ENCODE measurements at regions of chr14 and their contacts with region 1.

Region 1: GRCh38 chr14:66507722-66508546 is at the start of gene GPHN:
- DNase-seq: peak; percentile 98
- ATAC-seq: peak; percentile 95
- H3K4me3 ChIP-seq: peak within 1 kb of the TSS; percentile 95
- H3K27ac ChIP-seq: peak within 1 kb of the TSS; percentile 78
- H3K4me1 ChIP-seq: peaks cover 22% of the 10 kb centered on the region
- H3K27me3 ChIP-seq: no peaks in the 10 kb centered on the region
- CTCF ChIP-seq: no peak; the same call in 1 of the 2 replicates
- total RNA-seq, gene GPHN: 23.4 and 39.5 TPM in 2 replicates

Region 2: DNA sequence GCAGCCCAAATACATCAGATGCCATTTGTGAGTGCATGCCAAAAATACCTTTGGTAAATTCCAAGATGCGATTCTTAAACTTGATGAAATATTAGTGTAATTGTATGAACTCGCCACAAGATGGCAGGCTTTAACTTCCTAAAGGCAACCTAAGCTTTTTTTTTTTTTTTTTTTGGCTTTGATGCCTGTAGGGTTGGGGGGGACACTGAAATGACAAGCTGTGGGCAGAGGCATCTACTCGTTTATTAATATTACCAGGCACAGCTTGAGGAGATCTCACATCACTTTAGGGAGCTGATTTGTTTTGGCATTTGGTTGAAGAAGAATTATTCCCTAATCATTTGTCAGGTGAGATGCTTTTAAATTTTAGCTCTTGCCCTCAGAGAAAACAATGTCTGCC is 148.4 kb before region 1 on chr14:
- CTCF ChIA-PET with region 1: interaction called, 15 read pairs
- POLR2A ChIA-PET with region 1: no interaction called
- intact Hi-C with region 1: no loop called
- DNase-seq: peak; percentile 70
- ATAC-seq: peak; percentile 34
- H3K4me3 ChIP-seq: no peak overlapping the region
- H3K27ac ChIP-seq: no peak overlapping the region
- H3K4me1 ChIP-seq: no peaks in the 10 kb centered on the region
- H3K27me3 ChIP-seq: peaks cover 40% of the 10 kb centered on the region
- CTCF ChIP-seq: peak; percentile 84

Region 3: GRCh38 chr14:66444271-66444927 is 63.5 kb before region 1 on chr14:
- CTCF ChIA-PET with region 1: no interaction called
- POLR2A ChIA-PET with region 1: no interaction called
- intact Hi-C with region 1: no loop called
- DNase-seq: no peak
- ATAC-seq: no peak
- H3K4me3 ChIP-seq: no peak overlapping the region
- H3K27ac ChIP-seq: no peak overlapping the region
- H3K4me1 ChIP-seq: 0 out of 2 replicates have a peak, but pooled peaks cover 3% of the 10 kb centered on the region
- H3K27me3 ChIP-seq: no peaks in the 10 kb centered on the region
- CTCF ChIP-seq: no peak

Region 4: DNA sequence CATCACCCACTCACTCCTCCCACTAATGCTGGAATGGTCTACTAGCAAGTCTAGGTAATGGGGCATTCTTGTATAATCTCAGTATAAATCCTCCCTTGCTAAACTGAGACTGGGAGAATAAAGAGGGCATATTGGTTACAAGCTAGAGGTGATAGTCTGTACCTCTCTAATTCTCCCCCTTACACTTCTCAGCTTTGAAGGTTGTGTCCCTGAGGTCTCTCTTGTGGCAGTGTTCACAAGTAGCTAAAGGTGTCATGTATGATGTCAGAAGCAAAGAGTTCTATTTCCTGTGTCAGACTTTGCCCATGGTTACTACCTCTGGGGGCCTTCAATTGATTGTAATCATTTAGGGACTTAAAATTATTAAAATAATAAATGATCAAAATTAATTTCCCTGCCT is 48.3 kb before region 1 on chr14:
- CTCF ChIA-PET with region 1: no interaction called
- POLR2A ChIA-PET with region 1: no interaction called
- intact Hi-C with region 1: no loop called
- DNase-seq: no peak
- ATAC-seq: no peak
- H3K4me3 ChIP-seq: no peak overlapping the region
- H3K27ac ChIP-seq: no peak overlapping the region
- H3K4me1 ChIP-seq: no peaks in the 10 kb centered on the region
- H3K27me3 ChIP-seq: no peaks in the 10 kb centered on the region
- CTCF ChIP-seq: no peak

Region 5: DNA sequence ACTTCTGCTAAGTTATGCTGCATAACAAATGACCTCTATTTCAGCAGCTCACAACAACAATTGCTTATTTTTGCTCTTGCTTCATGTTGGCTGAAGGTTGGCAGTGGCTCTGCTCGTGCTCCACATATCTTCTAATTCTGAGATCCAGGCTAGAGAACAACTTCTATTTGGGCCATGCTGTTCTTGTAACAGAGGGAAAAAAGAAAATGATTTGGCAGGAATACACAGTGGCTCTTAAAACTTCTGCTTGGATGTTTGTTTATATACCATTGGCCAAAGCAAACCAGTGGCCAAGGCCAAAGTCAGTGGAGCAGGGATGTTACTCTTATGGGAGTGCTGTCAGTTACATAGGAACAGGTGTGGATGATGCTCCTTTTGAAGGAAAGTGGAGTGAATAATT is 32.1 kb after region 1 on chr14:
- CTCF ChIA-PET with region 1: no interaction called
- POLR2A ChIA-PET with region 1: no interaction called
- intact Hi-C with region 1: loop called (anchors 5 kb)
- DNase-seq: no peak
- ATAC-seq: no peak
- H3K4me3 ChIP-seq: no peak overlapping the region
- H3K27ac ChIP-seq: no peak overlapping the region
- H3K4me1 ChIP-seq: no peaks in the 10 kb centered on the region
- H3K27me3 ChIP-seq: no peaks in the 10 kb centered on the region
- CTCF ChIP-seq: no peak

Region 6: DNA sequence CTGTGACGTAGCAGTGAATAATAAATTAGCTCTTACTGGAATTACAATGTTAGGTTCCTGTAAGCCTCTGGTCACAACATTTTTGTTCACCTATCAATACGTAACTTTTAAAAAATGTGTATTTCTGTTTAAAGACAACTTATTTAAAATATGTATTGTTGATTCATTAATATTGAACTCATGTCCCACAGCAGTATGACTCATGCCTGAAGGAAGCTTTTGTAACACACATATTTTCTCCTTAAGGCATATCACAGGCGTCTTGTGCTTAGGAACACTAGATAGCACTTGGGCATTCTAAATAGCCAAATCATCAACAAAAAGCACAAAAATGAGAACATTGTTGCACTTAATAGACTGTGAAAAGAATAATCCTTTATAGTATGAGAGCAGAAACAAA is 92.5 kb after region 1 on chr14:
- CTCF ChIA-PET with region 1: no interaction called
- POLR2A ChIA-PET with region 1: no interaction called
- intact Hi-C with region 1: loop called (anchors 5 kb)
- DNase-seq: peak; percentile 45
- ATAC-seq: peak; percentile 66
- H3K4me3 ChIP-seq: no peak overlapping the region
- H3K27ac ChIP-seq: no peak overlapping the region
- H3K4me1 ChIP-seq: peaks cover 21% of the 10 kb centered on the region
- H3K27me3 ChIP-seq: no peaks in the 10 kb centered on the region
- CTCF ChIP-seq: no peak

Region 7: DNA sequence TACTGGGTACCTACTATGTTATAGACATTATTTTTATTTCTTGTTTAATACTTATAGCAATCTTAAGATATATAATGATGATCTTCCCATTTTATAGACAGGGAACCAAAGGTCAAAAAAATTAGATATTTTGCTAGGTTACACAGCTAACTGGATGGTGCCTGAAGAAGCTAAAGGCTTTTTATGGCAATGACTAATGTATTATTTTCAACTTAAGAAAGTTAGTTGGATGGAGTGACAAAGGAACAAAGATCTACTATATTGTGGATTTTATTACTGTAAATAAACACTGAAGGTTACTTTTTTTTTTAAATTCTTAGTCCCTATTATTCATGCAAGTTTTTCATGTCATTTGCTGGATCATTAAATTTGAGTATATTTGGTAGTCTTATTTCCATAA is 227.9 kb after region 1 on chr14:
- CTCF ChIA-PET with region 1: no interaction called
- POLR2A ChIA-PET with region 1: no interaction called
- intact Hi-C with region 1: loop called (anchors 1 kb)
- DNase-seq: peak; percentile 7
- ATAC-seq: peak; percentile 98
- H3K4me3 ChIP-seq: no peak overlapping the region
- H3K27ac ChIP-seq: no peak overlapping the region
- H3K4me1 ChIP-seq: no peaks in the 10 kb centered on the region
- H3K27me3 ChIP-seq: no peaks in the 10 kb centered on the region
- CTCF ChIP-seq: no peak

Region 8: GRCh38 chr14:67359775-67360648 is 852.1 kb after region 1 on chr14 and contains the starts of genes ATP6V1D and EIF2S1:
- CTCF ChIA-PET with region 1: no interaction called
- POLR2A ChIA-PET with region 1: no interaction called
- intact Hi-C with region 1: loop called (anchors 1 kb)
- DNase-seq: peak; percentile 99
- ATAC-seq: peak; percentile 85
- H3K4me3 ChIP-seq: peak within 1 kb of the TSS; percentile 83
- H3K27ac ChIP-seq: peak within 1 kb of the TSS; percentile 79
- H3K4me1 ChIP-seq: peaks cover 40% of the 10 kb centered on the region
- H3K27me3 ChIP-seq: no peaks in the 10 kb centered on the region
- CTCF ChIP-seq: peak; percentile 100
- total RNA-seq, gene ATP6V1D: 69.6 and 85.9 TPM in 2 replicates
- total RNA-seq, gene EIF2S1: 345 and 415 TPM in 2 replicates